ENCODE measurements at regions of chr9 and their contacts with region 1.

Region 1: GRCh38 chr9:68974431-68974830 is 39.5 kb downstream of the PRKACG start:
- DNase-seq: no peak
- ATAC-seq: peak; percentile 26
- H3K4me3 ChIP-seq: no peak overlapping the region
- H3K4me3 Mint-ChIP-seq: no peak overlapping the region
- H3K27ac ChIP-seq: peak overlapping the region in 1 of 2 donors; percentile 15
- H3K27ac Mint-ChIP-seq: no peak overlapping the region
- H3K4me1 ChIP-seq: peaks cover 4% of the 10 kb centered on the region
- H3K4me1 Mint-ChIP-seq: peaks cover 8% of the 10 kb centered on the region
- H3K27me3 ChIP-seq: no peaks in the 10 kb centered on the region
- H3K27me3 Mint-ChIP-seq: no peaks in the 10 kb centered on the region
- CTCF ChIP-seq: no peak

Region 2: GRCh38 chr9:69027355-69028096 is 53.1 kb after region 1 on chr9:
- CTCF ChIA-PET with region 1: no interaction called
- POLR2A ChIA-PET with region 1: no interaction called
- intact Hi-C with region 1: loop called in 1 of 2 experiments (anchors 10 kb)
- DNase-seq: peak in 8 of 14 experiments; percentile 9 to 78 (median 44)
- ATAC-seq: peak; percentile 70
- H3K4me3 ChIP-seq: no peak overlapping the region
- H3K4me3 Mint-ChIP-seq: peak overlapping the region; percentile 68
- H3K27ac ChIP-seq: no peak overlapping the region
- H3K27ac Mint-ChIP-seq: peak overlapping the region; percentile 63
- H3K4me1 ChIP-seq: peaks cover 33% of the 10 kb centered on the region
- H3K4me1 Mint-ChIP-seq: peaks cover 55% of the 10 kb centered on the region
- H3K27me3 ChIP-seq: no peaks in the 10 kb centered on the region
- H3K27me3 Mint-ChIP-seq: no peaks in the 10 kb centered on the region
- CTCF ChIP-seq: peak; percentile 79

Region 3: DNA sequence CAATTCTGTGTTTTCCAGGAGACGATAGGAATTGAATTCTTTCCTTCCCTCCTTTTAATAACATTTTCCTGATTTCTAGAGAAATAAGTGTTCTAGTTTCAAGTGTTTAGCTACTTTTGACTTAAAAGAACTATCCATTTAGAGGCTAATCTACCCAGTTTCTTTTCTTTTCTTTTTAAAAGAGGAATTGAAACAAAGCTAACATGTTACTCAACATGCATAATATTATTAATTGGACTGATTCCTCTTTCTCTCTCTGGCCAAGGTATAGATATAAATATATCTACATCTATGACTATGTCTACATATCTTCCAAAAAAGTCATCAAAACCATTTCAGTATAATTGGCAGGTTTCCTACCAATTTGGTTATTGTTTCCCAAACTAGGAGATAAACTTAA is 1837.2 kb after region 1 on chr9:
- CTCF ChIA-PET with region 1: no interaction called
- POLR2A ChIA-PET with region 1: no interaction called
- intact Hi-C with region 1: no loop called
- DNase-seq: no peak
- ATAC-seq: no peak
- H3K4me3 ChIP-seq: no peak overlapping the region
- H3K4me3 Mint-ChIP-seq: no peak overlapping the region
- H3K27ac ChIP-seq: no peak overlapping the region
- H3K27ac Mint-ChIP-seq: no peak overlapping the region
- H3K4me1 ChIP-seq: no peaks in the 10 kb centered on the region
- H3K4me1 Mint-ChIP-seq: no peaks in the 10 kb centered on the region
- H3K27me3 ChIP-seq: no peaks in the 10 kb centered on the region
- H3K27me3 Mint-ChIP-seq: peaks cover 8% of the 10 kb centered on the region
- CTCF ChIP-seq: no peak